IMR-90 (cell line): ENCODE measurements at regions of chr1 and their contacts with region 1.

Region 1: DNA sequence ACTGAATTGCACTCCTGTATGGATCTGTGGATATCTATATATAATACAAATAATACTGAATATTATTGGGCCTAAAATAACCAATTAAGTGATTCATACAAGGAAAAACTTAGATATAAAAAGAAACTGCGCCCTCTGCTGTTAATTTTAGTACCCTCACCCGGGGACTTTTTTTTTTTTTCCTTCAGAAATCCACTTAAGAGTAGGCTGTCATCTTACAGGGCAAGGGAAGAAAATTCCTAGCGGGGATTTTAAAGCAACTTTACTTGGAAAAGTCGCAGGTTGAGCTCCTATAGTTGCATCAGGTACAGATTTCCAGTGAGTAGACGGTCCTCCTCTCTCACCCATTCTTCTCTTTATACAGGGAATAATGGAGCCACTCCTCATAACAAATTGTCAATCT is 1.3 kb downstream of the NTNG1 start:
- DNase-seq: peak; percentile 50
- ATAC-seq: peak; percentile 16; the same call in 1 of the 2 replicates
- H3K4me3 ChIP-seq: peak overlapping the region; percentile 46; the same call in 1 of the 2 replicates
- H3K27ac ChIP-seq: no peak overlapping the region
- H3K4me1 ChIP-seq: no peaks in the 10 kb centered on the region
- H3K27me3 ChIP-seq: peaks cover 5% of the 10 kb centered on the region; the same call in 1 of the 2 replicates
- CTCF ChIP-seq: peak; percentile 65
- POLR2A ChIP-seq: no peak
- RAD21 ChIP-seq: peak; percentile 48

Region 2: DNA sequence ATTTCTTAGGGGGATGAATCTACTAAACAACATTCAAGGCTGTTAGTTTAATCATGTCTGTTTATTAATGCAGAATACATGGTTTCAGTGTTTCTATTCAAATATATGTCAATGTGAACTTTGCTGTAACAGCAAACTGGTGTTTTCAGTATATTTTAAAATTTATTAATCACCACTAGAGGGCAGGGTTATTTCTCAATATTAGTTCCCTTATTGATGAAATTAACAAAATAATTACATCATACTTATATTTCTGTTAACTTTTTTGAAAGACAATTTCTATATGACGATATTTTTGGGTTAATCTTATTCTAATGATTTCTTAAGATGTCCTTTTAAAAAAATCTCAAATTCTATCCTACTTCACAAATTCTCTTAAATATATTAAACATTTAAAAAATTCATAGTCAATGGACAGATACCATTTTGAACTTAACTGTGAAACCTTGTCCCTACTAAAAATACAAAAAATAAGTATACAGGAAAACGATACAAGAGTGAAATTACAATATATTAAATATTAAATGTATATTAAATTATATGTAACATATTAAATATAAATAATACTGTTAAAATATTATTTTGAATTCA is 1119.7 kb before region 1 on chr1:
- CTCF ChIA-PET with region 1: no interaction called
- POLR2A ChIA-PET with region 1: no interaction called
- dilution Hi-C with region 1: no loop called
- in situ Hi-C with region 1: no loop called
- intact Hi-C with region 1: loop called (anchors 5 kb)
- DNase-seq: no peak
- ATAC-seq: no peak
- H3K4me3 ChIP-seq: no peak overlapping the region
- H3K27ac ChIP-seq: no peak overlapping the region
- H3K4me1 ChIP-seq: no peaks in the 10 kb centered on the region
- H3K27me3 ChIP-seq: no peaks in the 10 kb centered on the region
- CTCF ChIP-seq: peak; percentile 34; the same call in 1 of the 2 replicates
- POLR2A ChIP-seq: no peak
- RAD21 ChIP-seq: no peak

Region 3: DNA sequence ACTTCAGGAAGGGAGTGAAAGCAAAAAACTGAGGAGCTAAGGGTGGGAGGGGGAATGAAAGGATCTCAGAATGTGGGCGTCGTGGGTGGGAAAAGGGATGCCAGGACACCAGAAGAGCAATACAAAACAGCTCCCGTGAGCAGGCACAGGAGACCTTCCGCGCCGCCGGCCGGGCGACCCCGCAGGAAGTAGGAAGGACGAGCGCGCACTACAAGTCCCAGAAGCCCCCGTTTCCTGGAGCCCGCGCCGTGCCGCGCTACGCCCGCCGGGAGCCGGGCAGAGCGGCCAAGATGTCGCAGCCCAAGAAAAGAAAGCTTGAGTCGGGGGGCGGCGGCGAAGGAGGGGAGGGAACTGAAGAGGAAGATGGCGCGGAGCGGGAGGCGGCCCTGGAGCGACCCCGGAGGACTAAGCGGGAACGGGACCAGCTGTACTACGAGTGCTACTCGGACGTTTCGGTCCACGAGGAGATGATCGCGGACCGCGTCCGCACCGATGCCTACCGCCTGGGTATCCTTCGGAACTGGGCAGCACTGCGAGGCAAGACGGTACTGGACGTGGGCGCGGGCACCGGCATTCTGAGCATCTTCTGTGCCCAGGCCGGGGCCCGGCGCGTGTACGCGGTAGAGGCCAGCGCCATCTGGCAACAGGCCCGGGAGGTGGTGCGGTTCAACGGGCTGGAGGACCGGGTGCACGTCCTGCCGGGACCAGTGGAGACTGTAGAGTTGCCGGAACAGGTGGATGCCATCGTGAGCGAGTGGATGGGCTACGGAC is 85.5 kb before region 1 on chr1 and contains the start of gene PRMT6:
- CTCF ChIA-PET with region 1: no interaction called
- POLR2A ChIA-PET with region 1: no interaction called
- dilution Hi-C with region 1: no loop called
- in situ Hi-C with region 1: no loop called
- intact Hi-C with region 1: loop called (anchors 2 kb)
- DNase-seq: peak; percentile 70
- ATAC-seq: peak; percentile 96
- H3K4me3 ChIP-seq: peak within 1 kb of the TSS; percentile 81
- H3K27ac ChIP-seq: peak within 1 kb of the TSS; percentile 76
- H3K4me1 ChIP-seq: peaks cover 2% of the 10 kb centered on the region
- H3K27me3 ChIP-seq: no peaks in the 10 kb centered on the region
- CTCF ChIP-seq: 0 out of 2 replicates have a peak, but pooled peaks have one; percentile 4
- POLR2A ChIP-seq: no peak
- RAD21 ChIP-seq: no peak
- total RNA-seq, gene PRMT6: 15.4 and 17.2 TPM in 2 replicates